ENCODE measurements at regions of chr12 and their contacts with region 1.

Region 1: DNA sequence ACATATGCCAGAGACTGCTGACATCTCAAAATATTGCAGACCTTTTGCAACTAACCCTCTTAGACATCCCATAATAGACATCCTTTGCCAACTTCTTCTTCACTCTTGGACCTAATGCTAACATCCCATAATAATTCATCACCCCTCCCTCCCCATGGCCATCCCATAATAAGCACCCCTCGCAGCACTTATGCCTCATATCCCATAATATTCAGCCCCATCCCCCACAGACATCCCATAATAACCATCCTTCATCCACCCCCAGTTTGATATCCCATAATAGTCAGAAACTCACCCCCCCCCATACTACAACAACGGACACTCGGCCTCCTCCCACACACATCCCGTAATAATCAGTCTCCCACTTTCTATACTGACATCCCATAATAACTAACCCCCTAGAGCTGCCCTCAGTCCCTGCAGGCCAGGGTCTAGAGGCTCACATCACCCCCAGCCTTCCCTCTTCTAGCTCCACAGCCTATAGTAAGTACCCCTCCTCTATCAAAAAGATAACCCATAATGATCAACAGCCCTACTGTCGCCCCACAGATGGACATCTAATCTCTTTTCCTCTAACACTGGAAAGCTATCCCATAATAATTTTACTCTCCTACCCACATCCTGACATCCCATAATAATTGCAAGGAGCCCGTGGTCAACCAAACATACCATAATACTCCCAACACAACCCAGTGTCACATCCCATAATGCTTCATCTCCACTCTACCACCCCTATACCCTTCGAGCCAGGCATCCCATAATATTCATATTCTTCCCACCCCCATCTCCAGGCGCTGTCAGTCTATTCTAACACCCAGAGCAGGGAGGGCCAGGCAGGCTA is 792 bp upstream of the CHD4 start:
- H3K4me3 Mint-ChIP-seq: no peak overlapping the region
- H3K27ac Mint-ChIP-seq: no peak overlapping the region
- H3K4me1 Mint-ChIP-seq: peaks cover 52% of the 10 kb centered on the region
- H3K27me3 Mint-ChIP-seq: no peaks in the 10 kb centered on the region

Region 2: DNA sequence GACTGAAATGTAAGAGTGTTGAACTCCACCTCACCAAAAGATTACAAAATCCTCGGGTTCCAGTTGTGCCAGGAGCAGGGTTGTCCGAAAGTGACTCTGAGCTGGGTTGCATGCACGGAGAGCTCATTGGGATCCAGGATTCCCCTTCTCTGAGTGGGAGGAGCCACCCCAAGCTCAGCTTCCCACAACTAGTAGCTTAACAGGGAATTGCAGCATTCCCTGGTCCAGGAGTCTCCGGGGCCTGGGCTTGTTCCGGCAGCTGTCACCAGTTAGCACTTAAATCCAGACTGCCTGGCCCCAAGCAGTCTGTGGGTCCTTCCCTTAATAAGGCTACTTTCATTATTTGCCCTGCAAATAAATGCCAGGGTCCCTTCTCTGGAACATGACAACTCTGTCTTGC is 357.6 kb before region 1 on chr12:
- intact Hi-C with region 1: no loop called
- H3K4me3 Mint-ChIP-seq: no peak overlapping the region
- H3K27ac Mint-ChIP-seq: no peak overlapping the region
- H3K4me1 Mint-ChIP-seq: no peaks in the 10 kb centered on the region
- H3K27me3 Mint-ChIP-seq: peaks cover 28% of the 10 kb centered on the region

Region 3: GRCh38 chr12:6647083-6647604 is 39.2 kb after region 1 on chr12 and contains the start of gene ACRBP:
- intact Hi-C with region 1: loop called (anchors 5 kb)
- H3K4me3 Mint-ChIP-seq: peak within 1 kb of the TSS; percentile 93
- H3K27ac Mint-ChIP-seq: peak within 1 kb of the TSS; percentile 98
- H3K4me1 Mint-ChIP-seq: peaks cover 52% of the 10 kb centered on the region
- H3K27me3 Mint-ChIP-seq: no peaks in the 10 kb centered on the region

Region 4: DNA sequence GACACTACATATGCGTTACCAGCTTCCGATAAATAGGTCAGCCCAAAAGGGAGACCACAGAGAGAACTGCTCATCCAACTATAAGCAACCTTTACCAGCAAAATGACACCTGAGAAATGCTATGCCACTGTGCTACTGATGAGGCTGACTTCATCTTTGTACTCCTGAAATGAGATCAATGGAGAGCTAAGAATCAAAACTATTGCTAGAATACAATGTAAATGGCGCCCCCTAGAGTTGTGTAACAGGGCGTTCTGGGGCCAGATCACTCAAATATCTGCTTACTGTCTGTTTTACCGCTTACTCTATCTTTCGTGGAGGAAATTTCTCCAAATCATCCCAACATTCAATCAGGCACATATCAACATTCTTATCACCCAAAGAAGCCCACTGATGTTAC is 76.6 kb after region 1 on chr12:
- intact Hi-C with region 1: no loop called
- H3K4me3 Mint-ChIP-seq: no peak overlapping the region
- H3K27ac Mint-ChIP-seq: no peak overlapping the region
- H3K4me1 Mint-ChIP-seq: peaks cover 52% of the 10 kb centered on the region
- H3K27me3 Mint-ChIP-seq: no peaks in the 10 kb centered on the region